ENCODE measurements at regions of chr10 and their contacts with region 1.

Region 1: GRCh38 chr10:119207367-119207668 is at the start of gene GRK5:
- DNase-seq: peak; percentile 96
- H3K4me3 Mint-ChIP-seq: peak within 1 kb of the TSS; percentile 100
- H3K27ac Mint-ChIP-seq: peak within 1 kb of the TSS; percentile 91
- H3K4me1 Mint-ChIP-seq: peaks cover 38% of the 10 kb centered on the region
- H3K27me3 Mint-ChIP-seq: no peaks in the 10 kb centered on the region
- total RNA-seq, gene GRK5: 22.7 to 23.0 TPM

Region 2: GRCh38 chr10:119104653-119105014 is 102.7 kb before region 1 on chr10:
- CTCF ChIA-PET with region 1: no interaction called
- POLR2A ChIA-PET with region 1: no interaction called
- intact Hi-C with region 1: no loop called
- DNase-seq: peak; percentile 31
- H3K4me3 Mint-ChIP-seq: peak overlapping the region; percentile 75
- H3K27ac Mint-ChIP-seq: no peak overlapping the region
- H3K4me1 Mint-ChIP-seq: peaks cover 20% of the 10 kb centered on the region
- H3K27me3 Mint-ChIP-seq: no peaks in the 10 kb centered on the region

Region 3: DNA sequence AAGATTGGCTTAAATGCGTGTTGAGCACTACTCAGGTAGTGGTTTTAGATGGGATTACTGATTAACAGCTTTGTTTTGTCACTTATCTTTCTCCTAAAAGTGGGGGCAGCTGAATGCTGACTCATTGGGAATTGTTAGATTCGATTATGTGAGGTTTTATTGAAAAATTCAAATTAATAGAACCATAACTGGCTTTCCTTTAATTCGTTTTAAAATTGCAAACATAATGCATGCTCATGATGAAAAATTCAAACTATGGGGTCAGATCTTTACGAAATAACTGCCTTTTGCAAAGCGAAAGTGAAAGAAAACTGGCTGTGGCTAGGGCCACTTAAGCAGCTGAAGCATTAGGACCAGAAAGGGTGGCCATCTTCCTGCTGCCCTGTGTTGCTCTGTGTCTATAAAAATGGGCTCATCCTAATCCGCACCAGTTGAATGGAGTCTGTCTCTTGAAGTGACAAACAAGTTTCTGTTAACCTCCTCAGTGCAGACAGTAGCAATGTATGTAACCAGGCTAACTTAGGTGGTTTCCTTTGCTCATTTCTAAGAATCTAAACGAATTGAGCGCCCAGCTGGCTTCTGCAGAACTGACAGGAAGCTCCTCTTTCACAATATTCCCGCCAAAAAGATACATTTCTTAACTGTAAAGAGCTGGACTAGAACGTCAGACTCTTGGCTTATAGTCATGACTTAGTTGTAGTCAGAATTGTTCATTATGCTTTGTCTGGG is 75.6 kb before region 1 on chr10:
- CTCF ChIA-PET with region 1: interaction called, 5 read pairs
- POLR2A ChIA-PET with region 1: interaction called, 3 read pairs
- intact Hi-C with region 1: loop called (anchors 2 kb)
- DNase-seq: peak; percentile 76
- H3K4me3 Mint-ChIP-seq: peak overlapping the region; percentile 80
- H3K27ac Mint-ChIP-seq: peak overlapping the region; percentile 100
- H3K4me1 Mint-ChIP-seq: peaks cover 60% of the 10 kb centered on the region
- H3K27me3 Mint-ChIP-seq: no peaks in the 10 kb centered on the region

Region 4: DNA sequence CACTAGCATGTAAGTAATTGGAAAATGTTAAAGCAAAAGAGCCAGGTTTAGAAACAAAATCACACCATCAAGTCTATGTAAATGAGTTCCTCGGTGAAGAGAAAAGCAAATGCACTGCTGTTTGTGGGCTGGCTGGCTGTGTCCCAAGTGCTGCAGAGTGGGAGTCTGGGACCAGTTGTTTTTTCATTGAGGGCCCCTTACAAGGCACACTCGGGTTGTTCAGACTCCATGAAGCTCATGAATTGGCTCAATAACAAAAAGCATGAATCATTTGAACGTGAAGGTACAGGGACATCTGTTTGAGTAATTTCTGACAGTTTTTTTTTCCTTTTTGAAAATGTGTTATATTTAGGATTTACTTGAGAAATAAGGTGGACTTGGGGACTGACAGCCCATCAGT is 28.0 kb after region 1 on chr10:
- CTCF ChIA-PET with region 1: interaction called, 6 read pairs
- POLR2A ChIA-PET with region 1: no interaction called
- intact Hi-C with region 1: loop called (anchors 2 kb)
- DNase-seq: peak; percentile 44
- H3K4me3 Mint-ChIP-seq: no peak overlapping the region
- H3K27ac Mint-ChIP-seq: peak overlapping the region; percentile 56
- H3K4me1 Mint-ChIP-seq: peaks cover 51% of the 10 kb centered on the region
- H3K27me3 Mint-ChIP-seq: no peaks in the 10 kb centered on the region

Region 5: GRCh38 chr10:119315128-119316001 is 108.0 kb after region 1 on chr10:
- CTCF ChIA-PET with region 1: interaction called, 3 read pairs
- POLR2A ChIA-PET with region 1: interaction called, 12 read pairs
- intact Hi-C with region 1: loop called (anchors 1 kb)
- DNase-seq: peak; percentile 90
- H3K4me3 Mint-ChIP-seq: peak overlapping the region; percentile 49
- H3K27ac Mint-ChIP-seq: peak overlapping the region; percentile 91
- H3K4me1 Mint-ChIP-seq: peaks cover 53% of the 10 kb centered on the region
- H3K27me3 Mint-ChIP-seq: peaks cover 5% of the 10 kb centered on the region

Region 6: DNA sequence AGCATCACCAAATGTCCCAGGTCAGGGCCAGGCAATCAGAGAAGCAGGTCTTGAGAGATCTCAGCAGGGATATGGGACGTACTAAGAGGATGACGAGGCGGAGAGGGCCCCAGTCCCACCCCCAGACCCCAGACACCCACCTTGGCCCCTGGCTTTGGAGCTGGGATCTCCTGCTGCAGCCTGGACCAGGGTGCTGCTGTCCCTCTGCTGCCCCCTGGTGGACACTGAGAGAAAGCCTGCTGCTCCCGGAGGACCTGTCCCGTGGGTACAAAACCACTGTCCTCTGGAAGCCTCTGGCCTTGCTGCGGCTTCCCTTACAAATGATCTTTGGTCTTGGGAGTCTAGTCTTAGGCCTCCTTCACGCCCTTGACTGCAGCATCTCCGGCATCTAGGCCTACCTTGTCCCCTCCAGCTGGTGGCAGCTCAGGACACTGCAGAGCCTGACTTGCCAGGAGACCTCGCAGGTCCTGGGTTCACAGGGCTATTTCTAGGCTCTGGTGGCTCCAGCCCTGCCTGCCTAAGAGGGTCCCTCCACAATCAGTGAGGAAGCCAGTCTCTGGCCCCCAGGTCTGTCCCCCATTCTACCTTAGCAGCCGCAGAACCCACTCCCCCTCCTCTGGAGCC is 238.1 kb after region 1 on chr10:
- CTCF ChIA-PET with region 1: interaction called, 103 read pairs
- POLR2A ChIA-PET with region 1: no interaction called
- intact Hi-C with region 1: loop called (anchors 2 kb)
- DNase-seq: peak; percentile 87
- H3K4me3 Mint-ChIP-seq: no peak overlapping the region
- H3K27ac Mint-ChIP-seq: no peak overlapping the region
- H3K4me1 Mint-ChIP-seq: no peaks in the 10 kb centered on the region
- H3K27me3 Mint-ChIP-seq: no peaks in the 10 kb centered on the region

Region 7: GRCh38 chr10:119531067-119531466 is 323.7 kb after region 1 on chr10:
- CTCF ChIA-PET with region 1: no interaction called
- POLR2A ChIA-PET with region 1: no interaction called
- intact Hi-C with region 1: no loop called
- DNase-seq: no peak
- H3K4me3 Mint-ChIP-seq: no peak overlapping the region
- H3K27ac Mint-ChIP-seq: no peak overlapping the region
- H3K4me1 Mint-ChIP-seq: peaks cover 53% of the 10 kb centered on the region
- H3K27me3 Mint-ChIP-seq: no peaks in the 10 kb centered on the region

Region 8: GRCh38 chr10:119596537-119597404 is 389.5 kb after region 1 on chr10 and contains the start of gene TIAL1:
- CTCF ChIA-PET with region 1: interaction called, 6 read pairs
- POLR2A ChIA-PET with region 1: no interaction called
- intact Hi-C with region 1: loop called (anchors 5 kb)
- DNase-seq: peak; percentile 97
- H3K4me3 Mint-ChIP-seq: peak within 1 kb of the TSS; percentile 89
- H3K27ac Mint-ChIP-seq: peak within 1 kb of the TSS; percentile 97
- H3K4me1 Mint-ChIP-seq: peaks cover 42% of the 10 kb centered on the region
- H3K27me3 Mint-ChIP-seq: no peaks in the 10 kb centered on the region
- total RNA-seq, gene TIAL1: 177 TPM